Vagina (tissue), 2 donors: ENCODE measurements at regions of chr11 and their contacts with region 1.

Region 1: DNA sequence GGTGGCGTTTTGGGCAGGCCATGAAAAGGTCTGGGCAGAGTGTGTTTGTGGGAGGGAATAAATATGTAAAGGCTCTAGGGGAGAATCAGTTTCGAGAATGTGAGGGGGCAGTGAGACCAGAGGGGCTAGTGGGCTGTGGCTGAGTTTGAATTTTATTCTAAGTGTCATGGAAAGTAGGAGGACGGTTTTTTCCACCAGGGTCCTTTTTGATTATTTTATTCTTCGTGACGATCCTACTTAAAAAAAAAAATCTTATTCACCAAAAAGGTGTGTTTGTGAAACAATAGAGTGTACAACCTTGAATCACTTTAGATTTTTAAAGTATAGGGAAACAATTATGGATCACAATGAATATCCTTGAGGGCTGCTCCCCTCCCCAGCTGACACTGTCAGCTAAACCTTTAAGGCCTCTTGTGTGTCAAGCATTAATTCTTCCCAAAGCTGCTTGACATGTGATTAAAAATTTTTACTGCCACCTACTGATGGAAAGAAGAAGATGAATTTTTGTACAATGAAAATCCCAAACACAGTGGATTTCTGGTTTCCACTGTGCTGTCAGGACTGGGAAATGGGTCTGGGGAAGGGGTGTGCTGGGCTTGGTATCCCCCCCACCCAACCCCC is 107.5 kb upstream of the OR4B1 start:
- DNase-seq: no peak
- H3K4me3 ChIP-seq: peak overlapping the region in 1 of 2 donors; percentile 30
- H3K27ac ChIP-seq: peak overlapping the region; percentile 16
- H3K4me1 ChIP-seq: peaks cover 20% of the 10 kb centered on the region
- H3K27me3 ChIP-seq: no peaks in the 10 kb centered on the region
- CTCF ChIP-seq: peak; percentile 19 to 64 (median 26)
- POLR2A ChIP-seq: no peak

Region 2: DNA sequence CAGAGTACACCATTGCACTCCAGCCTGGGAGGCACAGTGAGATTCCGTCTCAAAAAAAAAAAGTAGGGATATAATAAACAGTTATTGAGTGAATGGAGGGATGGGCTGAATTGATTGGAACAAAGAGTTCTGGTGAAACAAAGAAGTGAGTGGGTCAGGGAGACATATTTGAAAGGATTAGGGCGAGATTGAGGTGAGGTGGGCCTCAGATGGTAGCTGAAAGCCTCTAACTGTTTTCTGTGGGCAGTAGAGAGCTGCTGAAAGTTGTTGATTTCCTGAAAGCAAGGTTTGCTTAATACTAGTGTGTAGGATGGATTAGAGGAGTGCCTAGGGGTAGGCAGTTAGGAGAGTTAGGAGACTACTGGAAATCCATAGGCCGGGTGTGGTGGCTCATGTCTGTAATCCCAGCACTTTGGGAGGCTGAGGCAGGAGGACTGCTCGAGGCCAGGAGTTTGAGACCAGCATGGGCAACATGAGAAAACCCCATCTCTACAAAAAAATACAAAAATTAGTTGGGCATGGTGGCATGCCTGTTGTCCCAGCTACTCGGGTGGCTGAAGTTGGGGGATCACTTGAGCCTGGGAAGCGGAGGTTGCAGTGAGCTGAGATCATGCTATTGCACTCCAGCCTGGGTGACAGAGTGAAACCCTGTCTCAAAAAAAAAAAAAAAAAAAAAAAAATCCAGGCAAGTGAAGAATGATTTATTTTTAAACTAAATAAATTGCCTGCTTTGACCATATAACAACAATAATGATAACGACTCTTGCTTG is 170.2 kb before region 1 on chr11:
- intact Hi-C with region 1: loop called (anchors 5 kb)
- DNase-seq: no peak
- H3K4me3 ChIP-seq: no peak overlapping the region
- H3K27ac ChIP-seq: no peak overlapping the region
- H3K4me1 ChIP-seq: no peaks in the 10 kb centered on the region
- H3K27me3 ChIP-seq: no peaks in the 10 kb centered on the region
- CTCF ChIP-seq: no peak
- POLR2A ChIP-seq: no peak

Region 3: DNA sequence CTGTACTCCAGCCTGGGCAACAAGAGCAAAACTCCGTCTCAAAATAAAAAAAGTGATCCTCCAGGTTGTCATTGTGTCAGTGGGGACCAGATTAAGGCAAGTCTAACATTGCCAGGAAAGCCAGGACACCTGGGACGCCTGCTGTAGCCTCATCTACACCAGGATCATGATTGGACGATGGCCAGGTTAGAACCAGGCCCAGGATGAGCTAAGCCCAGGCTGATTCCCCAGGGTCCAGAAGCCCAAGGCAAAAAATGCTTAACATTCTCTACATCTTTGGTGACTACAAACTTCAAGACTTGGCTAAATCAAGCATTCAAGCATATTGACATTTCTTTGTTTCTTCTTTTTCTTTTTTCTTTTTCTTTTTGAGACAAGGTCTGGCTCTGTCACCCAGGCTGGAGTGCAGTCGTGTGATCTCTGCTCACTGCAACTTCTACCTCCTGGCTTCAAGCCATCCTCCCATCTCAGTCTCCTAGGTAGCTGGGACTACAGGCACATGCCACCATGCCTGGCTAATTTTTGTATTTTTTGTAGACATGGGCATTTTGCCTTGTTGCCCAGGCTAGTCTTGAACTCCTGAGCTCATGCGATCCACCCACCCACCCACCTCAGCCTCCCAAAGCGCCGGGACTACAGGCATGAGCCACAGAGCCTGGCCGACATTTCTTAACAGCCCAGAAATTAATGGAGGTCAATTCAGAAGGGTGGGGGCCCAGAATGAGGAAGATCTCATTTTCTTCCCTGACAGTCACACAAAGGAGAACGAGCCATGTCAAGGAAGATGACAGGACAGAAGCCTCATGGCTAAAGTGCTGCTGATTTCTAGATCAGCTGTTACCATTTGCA is 141.4 kb before region 1 on chr11:
- intact Hi-C with region 1: loop called (anchors 10 kb)
- DNase-seq: no peak
- H3K4me3 ChIP-seq: no peak overlapping the region
- H3K27ac ChIP-seq: no peak overlapping the region
- H3K4me1 ChIP-seq: no peaks in the 10 kb centered on the region
- H3K27me3 ChIP-seq: no peaks in the 10 kb centered on the region
- CTCF ChIP-seq: no peak
- POLR2A ChIP-seq: no peak

Region 4: DNA sequence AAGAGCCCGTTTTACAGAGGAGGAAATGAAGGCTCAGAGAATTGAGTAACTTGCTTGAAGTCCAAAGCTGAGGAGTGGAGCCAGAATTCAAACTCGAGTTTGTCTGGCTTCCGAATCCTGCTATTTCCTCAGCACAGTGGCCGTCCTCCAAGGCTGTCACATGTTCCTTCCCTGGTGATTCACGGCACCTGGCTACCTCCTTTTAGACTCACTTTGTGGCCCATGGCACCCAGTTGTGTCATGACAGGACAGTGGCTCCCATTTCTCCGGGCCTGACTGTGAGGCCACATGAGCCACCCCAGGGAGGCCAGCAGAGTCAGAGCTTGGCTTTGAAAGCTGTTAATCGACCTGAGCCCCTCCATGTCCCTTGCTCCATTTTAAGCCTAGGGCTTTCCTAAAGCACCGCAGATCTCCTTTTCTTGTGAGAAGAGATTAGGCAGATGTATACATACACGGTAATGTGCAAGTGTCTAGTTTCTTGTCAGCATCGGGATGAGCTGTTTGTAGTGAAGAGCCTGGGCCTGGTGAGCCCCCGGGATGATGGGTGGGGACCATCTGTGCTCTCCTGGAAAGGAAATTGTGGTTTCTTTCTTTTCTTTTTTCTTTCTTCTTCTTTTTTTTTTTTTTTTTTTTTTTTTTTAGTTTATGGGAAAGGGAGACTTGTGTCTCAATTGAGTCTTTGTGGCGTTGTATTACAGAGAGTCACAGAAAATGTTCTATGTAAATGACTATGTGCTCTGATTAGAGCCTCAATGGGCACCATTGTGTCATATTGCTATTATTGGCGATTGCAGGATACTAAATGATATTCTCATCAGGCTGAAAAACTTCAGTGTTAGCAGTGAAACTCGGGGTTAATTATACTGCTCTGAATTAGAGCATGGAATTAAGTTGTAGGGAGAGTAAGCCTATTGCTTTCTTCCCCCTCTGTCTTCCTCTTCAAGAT is 74.0 kb before region 1 on chr11:
- intact Hi-C with region 1: loop called (anchors 10 kb)
- DNase-seq: no peak
- H3K4me3 ChIP-seq: no peak overlapping the region
- H3K27ac ChIP-seq: no peak overlapping the region
- H3K4me1 ChIP-seq: peaks cover 11% of the 10 kb centered on the region
- H3K27me3 ChIP-seq: no peaks in the 10 kb centered on the region
- CTCF ChIP-seq: no peak
- POLR2A ChIP-seq: no peak